Psoas muscle (tissue), 8 donors: ENCODE measurements at regions of chr1 and their contacts with region 1.

Region 1: DNA sequence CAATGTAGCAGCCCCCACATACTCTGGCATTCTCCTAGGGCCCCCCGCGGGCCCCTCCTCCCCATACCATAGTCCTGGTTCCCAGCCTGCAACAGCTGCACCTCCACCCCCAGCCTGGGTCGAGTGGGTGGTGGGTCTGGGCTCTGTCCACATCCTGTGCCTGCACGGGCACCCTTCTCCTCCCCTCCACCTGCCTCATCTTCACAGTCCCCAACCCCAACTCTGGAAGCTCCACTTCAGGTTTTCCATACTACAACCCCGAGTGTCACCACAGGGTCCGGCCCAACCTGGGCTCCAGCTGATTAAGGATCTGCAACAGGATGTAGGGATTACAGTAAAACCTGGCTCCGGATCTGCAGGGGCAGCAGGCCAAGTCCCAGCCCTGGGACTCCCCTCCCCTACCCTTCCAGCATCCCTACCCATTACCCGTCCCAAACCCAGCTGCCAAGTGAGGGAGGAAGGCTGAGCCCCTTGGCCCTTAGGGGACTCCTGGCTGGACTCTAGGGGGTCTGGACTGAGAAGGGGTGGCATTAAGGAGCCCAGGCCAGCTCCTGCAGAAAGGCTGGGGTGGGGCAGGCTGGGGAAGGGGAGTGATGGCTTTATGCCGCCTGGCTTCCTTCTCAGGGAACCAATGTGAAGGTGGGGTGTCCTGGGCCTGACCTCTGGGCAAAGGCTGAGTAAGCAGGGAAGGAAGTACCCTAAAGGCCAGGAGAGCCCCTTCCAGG is 116.8 kb downstream of the CASZ1 start:
- DNase-seq: no peak
- ATAC-seq: peak in 3 of 4 donors; percentile 16 to 28 (median 21)
- H3K4me3 ChIP-seq: no peak overlapping the region
- H3K27ac ChIP-seq: peak overlapping the region; percentile 36
- H3K4me1 ChIP-seq: peaks cover 82% of the 10 kb centered on the region
- H3K27me3 ChIP-seq: no peaks in the 10 kb centered on the region
- CTCF ChIP-seq: no peak

Region 2: GRCh38 chr1:10514490-10515235 is 165.0 kb before region 1 on chr1:
- intact Hi-C with region 1: loop called in 1 of 2 experiments (anchors 5 kb)
- DNase-seq: no peak
- ATAC-seq: peak in 3 of 4 donors; percentile 45 to 62 (median 60)
- H3K4me3 ChIP-seq: no peak overlapping the region
- H3K27ac ChIP-seq: no peak overlapping the region
- H3K4me1 ChIP-seq: peaks cover 63% of the 10 kb centered on the region
- H3K27me3 ChIP-seq: no peaks in the 10 kb centered on the region
- CTCF ChIP-seq: peak; percentile 72

Region 3: DNA sequence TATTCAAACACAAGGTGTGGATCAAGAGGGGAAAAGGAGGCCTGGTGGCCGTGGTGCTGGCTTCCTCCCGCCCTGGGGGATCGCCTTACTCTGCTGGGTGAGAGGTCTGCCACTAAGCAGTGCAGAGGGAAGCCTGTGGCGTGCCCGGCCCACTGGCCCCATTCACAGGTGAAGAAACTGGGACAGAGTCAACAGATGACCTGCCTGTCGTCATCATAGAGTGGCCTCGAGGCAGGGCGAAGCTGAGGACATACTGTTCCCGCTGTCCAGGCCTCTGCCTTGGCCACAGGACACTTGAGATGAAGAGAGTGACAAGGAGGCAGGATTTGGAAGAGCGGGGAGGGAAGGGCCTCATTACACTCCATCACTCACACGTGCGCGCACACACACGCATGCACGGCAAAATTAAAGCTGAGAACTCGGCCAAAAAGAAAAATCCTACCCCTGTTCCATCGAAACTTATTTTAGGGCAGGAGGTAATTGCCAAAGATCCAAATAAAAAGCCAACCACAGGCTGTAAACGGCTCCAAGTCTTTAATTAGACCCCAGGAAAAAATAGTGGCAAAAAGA is 66.3 kb after region 1 on chr1:
- intact Hi-C with region 1: loop called in 1 of 2 experiments (anchors 5 kb)
- DNase-seq: peak; percentile 77 to 93
- ATAC-seq: peak; percentile 91 to 96 (median 93)
- H3K4me3 ChIP-seq: peak overlapping the region; percentile 38
- H3K27ac ChIP-seq: peak overlapping the region; percentile 87
- H3K4me1 ChIP-seq: peaks cover 45% of the 10 kb centered on the region
- H3K27me3 ChIP-seq: no peaks in the 10 kb centered on the region
- CTCF ChIP-seq: no peak

Region 4: DNA sequence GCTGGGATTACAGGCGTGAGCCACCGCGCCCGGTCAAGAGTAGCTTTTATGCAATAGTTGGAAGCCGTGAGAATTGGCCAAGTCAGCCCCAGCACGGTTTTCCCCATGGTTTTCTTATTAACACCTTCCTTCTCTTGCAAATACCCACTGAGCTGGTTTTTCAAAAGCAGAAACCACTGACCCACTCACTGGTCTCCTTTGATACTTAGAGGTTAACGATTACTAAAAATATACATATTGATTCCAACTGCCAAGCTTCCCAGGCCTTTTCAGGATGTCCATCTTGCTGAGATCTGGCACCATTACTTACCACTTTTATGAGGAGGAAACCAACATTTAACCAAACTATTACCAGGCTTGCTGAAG is 306.9 kb after region 1 on chr1:
- intact Hi-C with region 1: no loop called
- DNase-seq: no peak
- ATAC-seq: no peak
- H3K4me3 ChIP-seq: no peak overlapping the region
- H3K27ac ChIP-seq: no peak overlapping the region
- H3K4me1 ChIP-seq: no peaks in the 10 kb centered on the region
- H3K27me3 ChIP-seq: no peaks in the 10 kb centered on the region
- CTCF ChIP-seq: no peak